Activated T-helper 2 cell treated with anti-CD3 and anti-CD28 coated beads, Interferon-gamma antibody, Interleukin-2, Interleukin-4, amounts not matched to agents 10 μg/mL and 5 μg/mL and 100 μg/mL, durations not matched to agents 14 hours and 24 hours and 36 hours (primary cell): ENCODE measurements at regions of chr1 and their contacts with region 1.

Region 1: GRCh38 chr1:155277070-155277895 is at the start of gene HCN3:
- DNase-seq: peak; percentile 89
- H3K4me3 Mint-ChIP-seq: peak within 1 kb of the TSS; percentile 79
- H3K27ac Mint-ChIP-seq: peak within 1 kb of the TSS; percentile 58
- H3K4me1 Mint-ChIP-seq: peaks cover 30% of the 10 kb centered on the region
- H3K27me3 Mint-ChIP-seq: no peaks in the 10 kb centered on the region
- total RNA-seq, gene HCN3: 4.8 and 5.4 TPM in 2 replicates

Region 2: DNA sequence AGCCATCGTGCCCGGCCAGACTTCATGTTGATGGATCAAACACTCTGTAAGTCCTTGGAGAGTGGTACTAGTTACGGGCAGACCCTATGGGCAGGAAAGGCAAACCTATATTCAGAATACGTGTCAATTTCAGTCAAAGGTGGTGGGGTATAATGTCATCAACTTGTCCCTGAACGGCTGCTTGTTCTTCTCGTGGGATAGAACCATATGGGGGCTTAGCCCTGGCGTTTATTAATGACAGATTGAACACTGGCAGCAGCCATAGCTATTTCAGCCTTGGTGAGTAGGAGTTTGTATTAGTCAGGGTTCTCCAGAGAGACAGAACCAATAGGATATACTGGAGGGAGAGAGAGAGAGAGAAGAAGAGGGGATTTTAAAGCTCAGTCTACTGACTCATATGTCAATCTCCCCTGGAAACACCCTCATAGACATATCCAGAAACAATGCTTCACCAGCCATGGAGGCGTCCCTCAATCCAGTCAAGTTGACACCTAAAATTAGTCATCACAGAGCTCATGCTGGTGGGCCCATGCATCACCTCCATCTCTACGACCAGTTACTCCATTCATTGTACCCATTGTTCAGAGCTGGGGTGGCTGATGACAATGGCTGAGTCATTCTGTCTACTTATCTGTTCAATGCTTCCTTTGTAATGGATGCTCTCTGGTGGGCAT is 972.5 kb before region 1 on chr1:
- intact Hi-C with region 1: no loop called
- DNase-seq: no peak
- H3K4me3 Mint-ChIP-seq: no peak overlapping the region
- H3K27ac Mint-ChIP-seq: no peak overlapping the region
- H3K4me1 Mint-ChIP-seq: peaks cover 24% of the 10 kb centered on the region
- H3K27me3 Mint-ChIP-seq: no peaks in the 10 kb centered on the region

Region 3: GRCh38 chr1:155185351-155186066 is 91.8 kb before region 1 on chr1:
- intact Hi-C with region 1: no loop called
- DNase-seq: no peak
- H3K4me3 Mint-ChIP-seq: no peak overlapping the region
- H3K27ac Mint-ChIP-seq: peak overlapping the region; percentile 14
- H3K4me1 Mint-ChIP-seq: peaks cover 4% of the 10 kb centered on the region
- H3K27me3 Mint-ChIP-seq: no peaks in the 10 kb centered on the region

Region 4: GRCh38 chr1:155227261-155228095 is 49.8 kb before region 1 on chr1:
- intact Hi-C with region 1: loop called (anchors 1 kb)
- DNase-seq: peak; percentile 99
- H3K4me3 Mint-ChIP-seq: peak overlapping the region; percentile 95
- H3K27ac Mint-ChIP-seq: peak overlapping the region; percentile 94
- H3K4me1 Mint-ChIP-seq: peaks cover 26% of the 10 kb centered on the region
- H3K27me3 Mint-ChIP-seq: no peaks in the 10 kb centered on the region

Region 5: GRCh38 chr1:155261852-155262673 is 15.2 kb before region 1 on chr1 and contains the start of gene SCAMP3:
- intact Hi-C with region 1: loop called (anchors 1 kb)
- DNase-seq: peak; percentile 85
- H3K4me3 Mint-ChIP-seq: peak within 1 kb of the TSS; percentile 98
- H3K27ac Mint-ChIP-seq: peak within 1 kb of the TSS; percentile 90
- H3K4me1 Mint-ChIP-seq: peaks cover 21% of the 10 kb centered on the region
- H3K27me3 Mint-ChIP-seq: no peaks in the 10 kb centered on the region
- total RNA-seq, gene SCAMP3: 113 and 123 TPM in 2 replicates

Region 6: GRCh38 chr1:155323798-155324610 is 46.7 kb after region 1 on chr1:
- intact Hi-C with region 1: loop called (anchors 1 kb)
- DNase-seq: peak; percentile 89
- H3K4me3 Mint-ChIP-seq: peak overlapping the region; percentile 81
- H3K27ac Mint-ChIP-seq: peak overlapping the region; percentile 79
- H3K4me1 Mint-ChIP-seq: peaks cover 30% of the 10 kb centered on the region
- H3K27me3 Mint-ChIP-seq: no peaks in the 10 kb centered on the region

Region 7: DNA sequence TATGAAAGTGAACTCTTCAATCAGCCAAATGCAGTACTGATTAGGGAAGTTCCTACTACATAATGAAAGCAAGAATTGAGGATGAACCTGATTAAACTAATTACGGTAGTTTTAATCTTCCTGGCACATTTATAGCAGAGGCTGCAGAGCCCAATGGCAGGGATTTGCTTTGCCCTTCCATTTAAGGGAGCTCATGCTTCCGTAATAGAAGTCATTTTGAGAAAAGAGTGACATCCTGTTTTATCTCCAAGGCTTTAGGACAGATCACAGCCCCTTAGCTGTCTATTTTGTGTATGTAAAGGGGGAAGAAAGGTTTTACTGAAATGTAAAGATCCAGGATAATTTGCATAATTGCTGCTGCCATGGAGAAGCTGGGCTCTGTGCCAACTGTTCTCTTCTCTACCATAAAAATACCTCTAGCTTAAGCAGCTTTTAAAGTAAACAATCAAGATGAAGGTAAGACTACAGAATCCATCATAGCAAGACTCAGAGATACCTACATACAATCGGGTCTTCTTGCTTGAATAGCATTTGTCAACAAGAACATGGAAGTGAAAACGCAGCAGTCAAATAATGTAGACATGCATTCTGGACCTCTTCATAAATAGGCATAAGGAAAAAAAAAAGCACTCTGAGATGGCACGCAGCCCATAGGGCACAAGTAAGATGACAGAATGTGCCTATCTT is 222.8 kb after region 1 on chr1:
- intact Hi-C with region 1: no loop called
- DNase-seq: no peak
- H3K4me3 Mint-ChIP-seq: no peak overlapping the region
- H3K27ac Mint-ChIP-seq: no peak overlapping the region
- H3K4me1 Mint-ChIP-seq: peaks cover 19% of the 10 kb centered on the region
- H3K27me3 Mint-ChIP-seq: no peaks in the 10 kb centered on the region

Region 8: GRCh38 chr1:155859234-155859829 is 582.0 kb after region 1 on chr1 and contains the start of gene SYT11:
- intact Hi-C with region 1: loop called (anchors 5 kb)
- DNase-seq: peak; percentile 90
- H3K4me3 Mint-ChIP-seq: peak within 1 kb of the TSS; percentile 85
- H3K27ac Mint-ChIP-seq: peak within 1 kb of the TSS; percentile 92
- H3K4me1 Mint-ChIP-seq: peaks cover 41% of the 10 kb centered on the region
- H3K27me3 Mint-ChIP-seq: no peaks in the 10 kb centered on the region
- total RNA-seq, gene SYT11: 22.3 and 23.3 TPM in 2 replicates